ENCODE measurements at regions of chr11 and their contacts with region 1.

Region 1: GRCh38 chr11:7353100-7353499 is 101.4 kb downstream of the SYT9 start:
- DNase-seq: peak in 2 of 9 donors; percentile 8 to 21
- ATAC-seq: peak; percentile 54
- H3K4me3 ChIP-seq: no peak overlapping the region
- H3K4me3 Mint-ChIP-seq: no peak overlapping the region
- H3K27ac ChIP-seq: no peak overlapping the region
- H3K27ac Mint-ChIP-seq: no peak overlapping the region
- H3K4me1 ChIP-seq: no peaks in the 10 kb centered on the region
- H3K4me1 Mint-ChIP-seq: no peaks in the 10 kb centered on the region
- H3K27me3 ChIP-seq: no peaks in the 10 kb centered on the region
- H3K27me3 Mint-ChIP-seq: peaks cover 0 to 28% (median 20%) of the 10 kb centered on the region in 5 donors

Region 2: GRCh38 chr11:6862961-6863360 is 490.1 kb before region 1 on chr11 and contains the start of gene OR10A2:
- CTCF ChIA-PET with region 1: no interaction called
- POLR2A ChIA-PET with region 1: no interaction called
- intact Hi-C with region 1: no loop called
- DNase-seq: no peak
- ATAC-seq: no peak
- H3K4me3 ChIP-seq: no peak within 1 kb of the TSS
- H3K4me3 Mint-ChIP-seq: no peak within 1 kb of the TSS
- H3K27ac ChIP-seq: no peak within 1 kb of the TSS
- H3K27ac Mint-ChIP-seq: no peak within 1 kb of the TSS
- H3K4me1 ChIP-seq: no peaks in the 10 kb centered on the region
- H3K4me1 Mint-ChIP-seq: no peaks in the 10 kb centered on the region
- H3K27me3 ChIP-seq: peaks cover 0 to 4% of the 10 kb centered on the region in 2 donors
- H3K27me3 Mint-ChIP-seq: peaks cover 8 to 21% (median 17%) of the 10 kb centered on the region in 5 donors
- total RNA-seq, gene OR10A2: 0.05 TPM in 1 of 5 experiments, not detected in the others

Region 3: GRCh38 chr11:7257724-7258123 is 95.4 kb before region 1 on chr11:
- CTCF ChIA-PET with region 1: no interaction called
- POLR2A ChIA-PET with region 1: no interaction called
- intact Hi-C with region 1: no loop called
- DNase-seq: no peak
- ATAC-seq: no peak
- H3K4me3 ChIP-seq: no peak overlapping the region
- H3K4me3 Mint-ChIP-seq: no peak overlapping the region
- H3K27ac ChIP-seq: no peak overlapping the region
- H3K27ac Mint-ChIP-seq: no peak overlapping the region
- H3K4me1 ChIP-seq: no peaks in the 10 kb centered on the region
- H3K4me1 Mint-ChIP-seq: peaks cover 0 to 3% (median 0%) of the 10 kb centered on the region in 7 donors
- H3K27me3 ChIP-seq: peaks cover 0 to 10% of the 10 kb centered on the region in 2 donors
- H3K27me3 Mint-ChIP-seq: peaks cover 26 to 39% (median 32%) of the 10 kb centered on the region in 5 donors

Region 4: GRCh38 chr11:7548659-7549274 is 195.7 kb after region 1 on chr11:
- CTCF ChIA-PET with region 1: no interaction called
- POLR2A ChIA-PET with region 1: no interaction called
- intact Hi-C with region 1: no loop called
- DNase-seq: peak in 5 of 9 donors; percentile 12 to 47 (median 29)
- ATAC-seq: peak; percentile 83
- H3K4me3 ChIP-seq: no peak overlapping the region
- H3K4me3 Mint-ChIP-seq: no peak overlapping the region
- H3K27ac ChIP-seq: no peak overlapping the region
- H3K27ac Mint-ChIP-seq: no peak overlapping the region
- H3K4me1 ChIP-seq: no peaks in the 10 kb centered on the region
- H3K4me1 Mint-ChIP-seq: peaks cover 0 to 47% (median 19%) of the 10 kb centered on the region in 7 donors
- H3K27me3 ChIP-seq: no peaks in the 10 kb centered on the region
- H3K27me3 Mint-ChIP-seq: no peaks in the 10 kb centered on the region

Region 5: GRCh38 chr11:7665473-7666291 is 312.6 kb after region 1 on chr11:
- CTCF ChIA-PET with region 1: no interaction called
- POLR2A ChIA-PET with region 1: no interaction called
- intact Hi-C with region 1: loop called in 1 of 2 experiments (anchors 1 kb)
- DNase-seq: peak; percentile 24 to 73 (median 62)
- ATAC-seq: peak; percentile 98
- H3K4me3 ChIP-seq: no peak overlapping the region
- H3K4me3 Mint-ChIP-seq: no peak overlapping the region
- H3K27ac ChIP-seq: no peak overlapping the region
- H3K27ac Mint-ChIP-seq: peak overlapping the region in 1 of 9 donors; percentile 17
- H3K4me1 ChIP-seq: no peaks in the 10 kb centered on the region
- H3K4me1 Mint-ChIP-seq: peaks cover 0 to 6% (median 2%) of the 10 kb centered on the region in 7 donors
- H3K27me3 ChIP-seq: no peaks in the 10 kb centered on the region
- H3K27me3 Mint-ChIP-seq: peaks cover 0 to 3% (median 0%) of the 10 kb centered on the region in 5 donors

Measured in naive thymus-derived CD4-positive, alpha-beta T cell (primary cell).